ENCODE measurements at regions of chr2 and their contacts with region 1.

Region 1: DNA sequence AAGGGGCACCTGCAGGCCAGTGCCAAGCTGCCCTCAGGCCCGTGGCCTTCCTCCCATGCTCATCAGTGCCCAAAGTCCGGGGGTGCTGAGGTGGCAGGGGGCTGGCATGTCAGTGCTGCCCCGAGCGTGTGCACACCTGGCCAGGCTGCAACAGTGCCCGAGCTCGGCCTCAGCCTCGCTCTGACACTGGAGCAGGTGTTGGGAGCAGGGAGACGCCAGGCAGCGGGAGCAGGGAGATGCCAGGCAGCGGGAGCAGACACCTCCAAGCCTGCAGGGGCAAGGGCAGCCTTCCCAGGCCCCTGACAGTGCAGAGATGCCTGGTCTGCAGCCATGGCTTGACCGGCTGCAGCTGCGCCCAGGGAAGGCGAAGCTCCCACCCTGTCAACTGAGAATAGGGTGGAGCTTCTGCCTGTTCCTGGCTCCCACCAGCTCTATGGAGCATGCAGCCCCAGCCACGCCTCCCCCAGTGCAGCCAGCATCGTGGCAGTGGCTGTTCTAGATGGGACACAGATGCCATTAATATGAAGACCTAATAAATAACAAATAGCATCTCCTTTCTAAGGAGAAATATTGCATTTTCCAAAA is 82.4 kb downstream of the DTNB start:
- DNase-seq: no peak
- ATAC-seq: no peak
- H3K4me3 ChIP-seq: no peak overlapping the region
- H3K4me3 Mint-ChIP-seq: no peak overlapping the region
- H3K27ac ChIP-seq: no peak overlapping the region
- H3K27ac Mint-ChIP-seq: no peak overlapping the region
- H3K4me1 ChIP-seq: no peaks in the 10 kb centered on the region
- H3K4me1 Mint-ChIP-seq: peaks cover 6 to 44% (median 12%) of the 10 kb centered on the region in 7 donors
- H3K27me3 ChIP-seq: no peaks in the 10 kb centered on the region
- H3K27me3 Mint-ChIP-seq: no peaks in the 10 kb centered on the region

Region 2: DNA sequence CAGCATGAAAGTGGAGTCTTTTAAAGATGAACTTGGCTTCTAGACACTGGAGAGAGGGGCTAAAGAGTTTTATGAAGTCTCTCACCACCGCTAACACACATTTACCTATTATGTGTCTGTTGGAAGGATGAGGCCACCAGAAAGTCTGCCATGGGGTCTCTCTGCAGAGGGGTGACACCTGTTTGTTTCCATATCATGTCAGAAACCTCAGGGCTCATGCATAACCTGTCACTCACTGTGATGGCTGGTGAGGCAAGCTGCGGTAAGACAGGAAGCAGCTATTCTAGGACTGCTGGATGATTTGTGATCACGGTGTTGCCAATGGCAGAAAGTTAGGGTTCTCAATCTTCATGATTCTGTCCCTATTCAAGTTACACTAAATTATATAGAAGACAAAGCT is 188.5 kb before region 1 on chr2:
- CTCF ChIA-PET with region 1: no interaction called
- POLR2A ChIA-PET with region 1: no interaction called
- intact Hi-C with region 1: no loop called
- DNase-seq: no peak
- ATAC-seq: peak; percentile 24
- H3K4me3 ChIP-seq: no peak overlapping the region
- H3K4me3 Mint-ChIP-seq: peak overlapping the region in 1 of 10 donors; percentile 63
- H3K27ac ChIP-seq: no peak overlapping the region
- H3K27ac Mint-ChIP-seq: peak overlapping the region in 3 of 9 donors; percentile 4 to 91 (median 23)
- H3K4me1 ChIP-seq: no peaks in the 10 kb centered on the region
- H3K4me1 Mint-ChIP-seq: peaks cover 5 to 27% (median 13%) of the 10 kb centered on the region in 7 donors
- H3K27me3 ChIP-seq: no peaks in the 10 kb centered on the region
- H3K27me3 Mint-ChIP-seq: no peaks in the 10 kb centered on the region

Region 3: DNA sequence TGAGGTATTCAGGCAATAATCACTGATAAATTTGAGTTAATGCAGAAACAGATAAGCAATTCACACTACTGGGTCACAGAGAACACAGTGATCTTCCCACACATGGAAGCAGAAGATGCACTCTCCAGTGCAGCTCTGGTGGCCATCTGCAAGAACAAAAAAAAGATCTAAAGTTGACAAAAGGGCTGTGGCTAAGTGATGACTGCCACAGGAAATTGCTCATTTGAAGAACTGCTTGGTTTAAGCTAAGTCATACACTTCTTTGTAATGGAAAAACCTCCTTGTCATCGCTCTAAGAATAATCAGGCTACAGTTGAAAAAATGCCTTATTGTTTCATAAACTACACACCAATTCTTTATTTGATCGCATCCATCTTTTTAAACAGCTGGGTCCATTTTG is 32.8 kb before region 1 on chr2:
- CTCF ChIA-PET with region 1: no interaction called
- POLR2A ChIA-PET with region 1: no interaction called
- intact Hi-C with region 1: loop called in 1 of 2 experiments (anchors 1 kb)
- DNase-seq: peak in 6 of 9 donors; percentile 25 to 48 (median 32)
- ATAC-seq: peak; percentile 94
- H3K4me3 ChIP-seq: no peak overlapping the region
- H3K4me3 Mint-ChIP-seq: peak overlapping the region in 1 of 10 donors; percentile 44
- H3K27ac ChIP-seq: no peak overlapping the region
- H3K27ac Mint-ChIP-seq: peak overlapping the region in 3 of 9 donors; percentile 20 to 92 (median 41)
- H3K4me1 ChIP-seq: peaks cover 6 to 8% of the 10 kb centered on the region in 2 donors
- H3K4me1 Mint-ChIP-seq: peaks cover 17 to 56% (median 34%) of the 10 kb centered on the region in 7 donors
- H3K27me3 ChIP-seq: no peaks in the 10 kb centered on the region
- H3K27me3 Mint-ChIP-seq: no peaks in the 10 kb centered on the region